ENCODE measurements at regions of chr17 and their contacts with region 1.

Region 1: GRCh38 chr17:61389670-61390478 is 9.8 kb upstream of the TBX2 start:
- DNase-seq: peak in 7 of 10 donors; percentile 30 to 90 (median 63)

Region 2: DNA sequence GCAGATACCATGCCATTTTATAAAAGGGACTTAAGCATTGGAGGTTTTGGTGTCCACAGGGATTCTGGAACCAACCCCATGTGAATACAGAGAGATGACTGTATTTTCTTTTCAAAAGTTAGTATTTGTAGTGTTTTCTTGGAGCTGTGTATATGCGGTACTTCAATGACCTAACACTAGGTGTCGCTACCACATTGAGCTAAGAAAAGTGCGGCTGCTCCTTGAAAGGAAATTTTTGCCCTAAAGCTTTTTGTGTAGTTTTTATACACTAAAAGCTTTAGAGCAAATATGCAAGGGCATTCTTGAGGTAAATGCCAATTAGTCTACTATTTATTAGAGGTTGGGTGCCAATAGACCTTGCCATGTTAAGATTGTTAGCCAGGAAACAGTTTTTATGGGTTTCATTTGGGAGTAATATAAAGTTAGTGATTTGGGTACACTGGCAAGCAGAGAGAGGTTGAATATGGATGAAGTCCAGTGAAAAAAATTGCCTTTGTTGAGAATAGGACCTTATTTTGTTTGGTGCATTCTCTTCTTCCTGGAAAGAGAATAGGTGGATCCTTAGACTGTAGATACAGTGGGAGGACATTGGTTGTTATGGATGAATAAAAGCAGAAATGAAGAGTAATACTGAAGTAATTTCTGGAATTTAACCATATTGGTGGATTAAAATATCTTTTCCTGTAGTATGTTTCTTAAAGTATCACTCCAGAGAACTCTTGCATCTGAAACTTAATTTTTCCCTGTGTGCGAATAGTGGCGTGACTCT is 668.9 kb before region 1 on chr17:
- intact Hi-C with region 1: loop called (anchors 5 kb)
- DNase-seq: peak in 2 of 10 donors; percentile 10 to 38

Region 3: GRCh38 chr17:61002316-61002736 is 387.5 kb before region 1 on chr17:
- intact Hi-C with region 1: loop called (anchors 5 kb)
- DNase-seq: no peak

Region 4: GRCh38 chr17:61217878-61218837 is 171.7 kb before region 1 on chr17:
- intact Hi-C with region 1: no loop called
- DNase-seq: no peak

Region 5: DNA sequence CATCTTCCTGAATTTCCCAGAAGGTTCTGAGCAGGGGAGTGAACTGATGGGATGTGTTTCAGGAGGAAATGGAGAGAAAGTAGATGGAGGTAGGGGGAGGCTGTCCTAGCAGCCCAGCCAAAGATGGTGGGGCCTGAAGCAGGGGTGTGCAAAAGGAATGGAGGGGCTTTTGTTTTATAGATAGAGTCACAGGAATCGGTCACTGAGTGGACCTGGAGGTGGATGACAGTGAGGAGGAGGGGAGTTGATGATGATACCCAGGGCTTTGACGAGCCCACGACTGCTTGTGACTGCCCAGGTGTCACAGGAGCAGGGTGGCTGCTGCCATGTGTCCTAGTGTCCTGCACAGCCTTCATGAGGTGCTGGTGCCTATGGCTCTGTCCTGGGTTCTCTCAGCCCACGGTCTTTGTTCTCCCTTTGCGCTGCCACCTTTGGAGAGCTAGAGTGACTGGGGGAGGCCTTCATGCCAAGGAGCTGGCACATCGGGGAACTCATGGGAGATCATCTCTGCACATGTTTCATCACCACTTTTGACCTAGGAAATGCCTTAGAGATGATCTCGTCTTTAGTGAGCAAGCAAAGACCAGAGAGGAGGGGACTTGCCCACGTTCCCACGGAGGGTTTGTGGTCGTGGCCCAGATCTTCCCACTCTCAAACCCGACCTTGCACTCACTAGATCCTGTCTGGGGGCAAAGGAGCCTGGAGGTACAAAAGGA is 85.7 kb after region 1 on chr17:
- intact Hi-C with region 1: no loop called
- DNase-seq: no peak